Activated CD8-positive, alpha-beta T cell treated with anti-CD3 and anti-CD28 coated beads for 36 hours (primary cell): ENCODE measurements at regions of chr11 and their contacts with region 1.

Region 1: DNA sequence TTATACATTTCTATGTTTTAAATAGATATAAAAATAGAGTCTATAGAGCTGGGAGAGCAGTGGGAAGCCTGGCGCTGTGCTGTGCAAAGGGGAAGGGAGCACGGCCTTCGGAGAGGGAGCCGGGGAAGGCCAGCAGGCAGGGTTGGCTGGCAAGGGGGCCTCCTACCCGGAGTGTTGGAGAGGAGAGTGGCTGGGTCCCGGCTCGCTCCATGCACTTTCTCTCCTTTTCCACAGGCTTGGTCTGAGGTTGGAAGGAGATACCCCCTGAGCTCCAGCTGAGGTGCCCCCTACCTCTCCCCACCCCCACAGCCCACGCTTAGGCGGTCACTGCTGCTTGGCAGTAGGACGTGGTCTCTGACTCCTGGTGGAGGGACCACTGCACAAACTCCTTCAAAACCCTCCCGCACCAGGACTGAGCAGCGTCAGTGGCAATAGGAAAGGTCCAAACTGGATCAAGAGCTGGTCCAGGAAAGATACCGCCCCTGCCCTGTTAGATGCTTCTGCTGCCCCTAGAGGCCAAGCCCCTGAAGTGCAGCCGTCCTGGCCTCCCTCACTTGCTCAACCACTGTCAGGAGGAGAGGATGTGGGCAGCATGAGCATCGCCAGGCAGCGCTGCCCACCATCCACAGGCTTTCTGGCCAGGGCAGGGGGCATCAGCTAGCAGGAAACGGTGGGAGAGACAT is 52.9 kb downstream of the SYT13 start:
- DNase-seq: peak; percentile 79
- ATAC-seq: peak; percentile 99
- H3K4me3 Mint-ChIP-seq: no peak overlapping the region
- H3K27ac Mint-ChIP-seq: no peak overlapping the region
- H3K4me1 Mint-ChIP-seq: no peaks in the 10 kb centered on the region
- H3K27me3 Mint-ChIP-seq: peaks cover 15% of the 10 kb centered on the region
- CTCF ChIP-seq: peak; percentile 79

Region 2: GRCh38 chr11:45245218-45246045 is 12.2 kb after region 1 on chr11:
- CTCF ChIA-PET with region 1: interaction called, 10 read pairs
- POLR2A ChIA-PET with region 1: no interaction called
- intact Hi-C with region 1: no loop called
- DNase-seq: no peak
- ATAC-seq: no peak
- H3K4me3 Mint-ChIP-seq: no peak overlapping the region
- H3K27ac Mint-ChIP-seq: no peak overlapping the region
- H3K4me1 Mint-ChIP-seq: no peaks in the 10 kb centered on the region
- H3K27me3 Mint-ChIP-seq: peaks cover 6% of the 10 kb centered on the region
- CTCF ChIP-seq: no peak

Region 3: DNA sequence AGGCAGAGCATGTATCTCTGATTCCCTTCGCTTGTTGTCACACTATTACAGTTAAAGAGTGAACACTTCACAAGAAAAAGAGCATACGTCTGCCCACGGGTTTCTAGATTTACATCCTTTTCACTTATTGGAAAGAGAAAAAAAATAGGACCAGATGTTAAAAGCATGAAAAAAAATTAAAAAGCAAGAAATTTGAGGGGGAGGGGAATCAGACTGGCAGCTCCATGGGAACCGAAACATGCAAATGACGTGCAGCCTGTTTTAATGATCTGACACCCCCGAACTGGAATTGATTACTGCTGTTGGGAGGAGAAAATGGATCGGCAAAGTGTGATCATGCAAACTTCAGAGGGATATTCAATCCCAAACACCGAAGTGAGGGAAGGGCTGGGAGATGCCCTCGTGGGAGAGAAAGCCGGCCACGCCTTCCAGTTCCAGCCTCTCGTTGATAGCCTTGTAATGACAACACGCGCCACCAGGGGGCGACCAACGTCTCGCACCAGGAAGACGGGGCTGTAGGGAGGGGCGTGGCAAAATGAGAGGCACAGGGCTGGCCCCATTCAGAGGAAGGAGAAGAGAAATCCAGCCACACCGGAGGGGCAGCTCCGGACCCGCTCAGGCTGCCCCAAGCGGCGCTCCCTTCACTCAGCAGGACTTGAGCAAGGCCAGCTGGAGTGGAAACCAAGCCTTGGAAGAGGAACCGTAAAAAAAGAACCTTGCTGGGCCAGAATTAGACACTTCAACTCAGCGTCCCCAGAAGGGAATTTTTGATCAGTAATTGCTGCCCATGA is 106.7 kb after region 1 on chr11:
- CTCF ChIA-PET with region 1: no interaction called
- POLR2A ChIA-PET with region 1: no interaction called
- intact Hi-C with region 1: no loop called
- DNase-seq: peak; percentile 98
- ATAC-seq: peak; percentile 100
- H3K4me3 Mint-ChIP-seq: peak overlapping the region; percentile 55
- H3K27ac Mint-ChIP-seq: no peak overlapping the region
- H3K4me1 Mint-ChIP-seq: peaks cover 10% of the 10 kb centered on the region
- H3K27me3 Mint-ChIP-seq: peaks cover 10% of the 10 kb centered on the region
- CTCF ChIP-seq: peak; percentile 89